ENCODE measurements at regions of chr6 and their contacts with region 1.

Region 1: GRCh38 chr6:53986165-53986720 is 125.0 kb upstream of the MLIP start:
- DNase-seq: peak; percentile 75
- H3K4me3 ChIP-seq: no peak overlapping the region
- H3K27ac ChIP-seq: no peak overlapping the region
- H3K4me1 ChIP-seq: peaks cover 13% of the 10 kb centered on the region
- H3K27me3 ChIP-seq: no peaks in the 10 kb centered on the region
- CTCF ChIP-seq: peak; percentile 65 to 68
- POLR2A ChIP-seq: no peak

Region 2: GRCh38 chr6:53879608-53880007 is 106.6 kb before region 1 on chr6:
- CTCF ChIA-PET with region 1: no interaction called
- POLR2A ChIA-PET with region 1: no interaction called
- dilution Hi-C with region 1: no loop called
- intact Hi-C with region 1: no loop called
- DNase-seq: no peak
- H3K4me3 ChIP-seq: no peak overlapping the region
- H3K27ac ChIP-seq: no peak overlapping the region
- H3K4me1 ChIP-seq: no peaks in the 10 kb centered on the region
- H3K27me3 ChIP-seq: no peaks in the 10 kb centered on the region
- CTCF ChIP-seq: no peak
- POLR2A ChIP-seq: no peak

Region 3: GRCh38 chr6:54112151-54112650 is 126.0 kb after region 1 on chr6:
- CTCF ChIA-PET with region 1: interaction called, 15 read pairs
- POLR2A ChIA-PET with region 1: no interaction called
- dilution Hi-C with region 1: no loop called
- intact Hi-C with region 1: loop called (anchors 1 kb)
- DNase-seq: peak; percentile 91
- H3K4me3 ChIP-seq: peak overlapping the region in 1 of 3 experiments; percentile 28
- H3K27ac ChIP-seq: peak overlapping the region; percentile 89
- H3K4me1 ChIP-seq: peaks cover 38% of the 10 kb centered on the region
- H3K27me3 ChIP-seq: no peaks in the 10 kb centered on the region
- CTCF ChIP-seq: no peak
- POLR2A ChIP-seq: peak; percentile 56

Region 4: GRCh38 chr6:54173089-54173488 is 186.8 kb after region 1 on chr6:
- CTCF ChIA-PET with region 1: no interaction called
- POLR2A ChIA-PET with region 1: no interaction called
- dilution Hi-C with region 1: no loop called
- intact Hi-C with region 1: no loop called
- DNase-seq: peak; percentile 8
- H3K4me3 ChIP-seq: no peak overlapping the region
- H3K27ac ChIP-seq: no peak overlapping the region
- H3K4me1 ChIP-seq: no peaks in the 10 kb centered on the region
- H3K27me3 ChIP-seq: no peaks in the 10 kb centered on the region
- CTCF ChIP-seq: no peak
- POLR2A ChIP-seq: no peak

Region 5: DNA sequence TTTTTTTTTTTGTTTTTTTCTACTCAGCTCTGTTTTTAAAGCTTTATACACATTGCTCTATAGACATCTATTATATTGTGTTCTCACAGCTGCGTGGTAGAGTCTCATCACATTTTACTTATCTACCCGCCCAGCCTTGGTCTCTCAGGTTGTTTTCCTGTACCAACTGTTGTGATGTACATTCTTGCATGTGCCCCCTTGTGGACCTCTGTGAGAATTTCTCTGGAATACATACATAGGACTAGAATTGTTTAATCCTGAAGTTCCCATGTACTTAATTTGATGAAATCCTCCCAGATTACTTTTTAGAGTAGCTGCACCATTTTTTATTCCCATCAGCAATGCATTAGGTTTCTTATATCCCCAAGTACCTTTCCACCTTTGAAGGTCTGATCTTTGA is 281.6 kb after region 1 on chr6:
- CTCF ChIA-PET with region 1: interaction called, 94 read pairs
- POLR2A ChIA-PET with region 1: no interaction called
- dilution Hi-C with region 1: no loop called
- intact Hi-C with region 1: loop called (anchors 1 kb)
- DNase-seq: peak; percentile 65
- H3K4me3 ChIP-seq: no peak overlapping the region
- H3K27ac ChIP-seq: no peak overlapping the region
- H3K4me1 ChIP-seq: peaks cover 7% of the 10 kb centered on the region
- H3K27me3 ChIP-seq: no peaks in the 10 kb centered on the region
- CTCF ChIP-seq: peak; percentile 44 to 48
- POLR2A ChIP-seq: no peak

Region 6: DNA sequence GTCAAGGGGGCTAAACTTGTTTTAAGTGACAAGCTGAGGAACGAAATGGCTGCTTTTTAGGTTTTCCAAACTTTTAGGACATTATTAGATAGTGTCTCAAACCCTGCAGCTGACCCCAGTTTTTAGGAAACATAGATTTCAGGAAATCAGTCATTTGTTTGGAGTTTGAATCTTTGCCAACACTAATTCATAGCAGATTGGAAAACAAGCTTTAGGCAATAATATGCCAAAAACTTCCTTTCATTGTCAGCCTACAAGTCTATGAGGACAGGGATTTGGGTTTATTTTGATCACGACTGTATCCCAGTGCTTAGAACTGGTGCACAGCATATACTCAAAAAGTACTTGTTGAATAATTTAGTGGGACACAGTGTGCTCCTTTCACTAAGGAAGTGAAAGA is 445.2 kb after region 1 on chr6:
- CTCF ChIA-PET with region 1: no interaction called
- POLR2A ChIA-PET with region 1: no interaction called
- dilution Hi-C with region 1: no loop called
- intact Hi-C with region 1: loop called (anchors 10 kb)
- DNase-seq: peak; percentile 73
- H3K4me3 ChIP-seq: no peak overlapping the region
- H3K27ac ChIP-seq: no peak overlapping the region
- H3K4me1 ChIP-seq: peaks cover 10% of the 10 kb centered on the region
- H3K27me3 ChIP-seq: peaks cover 25 to 26% of the 10 kb centered on the region in 2 experiments
- CTCF ChIP-seq: no peak
- POLR2A ChIP-seq: no peak

Region 7: GRCh38 chr6:54737247-54737646 is 751.0 kb after region 1 on chr6:
- CTCF ChIA-PET with region 1: interaction called, 4 read pairs
- POLR2A ChIA-PET with region 1: no interaction called
- dilution Hi-C with region 1: no loop called
- intact Hi-C with region 1: loop called (anchors 1 kb)
- DNase-seq: no peak
- H3K4me3 ChIP-seq: no peak overlapping the region
- H3K27ac ChIP-seq: no peak overlapping the region
- H3K4me1 ChIP-seq: no peaks in the 10 kb centered on the region
- H3K27me3 ChIP-seq: no peaks in the 10 kb centered on the region
- CTCF ChIP-seq: peak; percentile 15 to 29
- POLR2A ChIP-seq: no peak

Region 8: DNA sequence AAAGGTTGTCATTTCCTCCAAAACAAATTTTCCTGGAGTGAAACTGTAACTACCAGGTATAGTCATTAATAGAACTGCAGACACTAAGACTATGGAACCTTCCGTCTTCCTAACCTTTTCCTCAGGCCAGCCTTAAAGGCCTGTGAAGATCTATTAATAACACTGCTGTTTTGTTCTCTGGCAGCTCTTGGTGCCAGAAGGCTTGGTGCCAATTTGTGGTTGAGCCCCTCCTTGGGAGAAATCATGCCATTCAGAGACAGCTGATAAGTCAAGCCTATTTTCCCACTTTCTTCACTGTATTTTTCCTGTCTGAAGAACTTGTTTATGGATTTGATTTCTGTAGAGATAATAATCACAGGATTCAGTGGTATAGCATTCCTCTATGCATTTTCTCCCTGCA is 1252.9 kb after region 1 on chr6:
- CTCF ChIA-PET with region 1: interaction called, 6 read pairs
- POLR2A ChIA-PET with region 1: no interaction called
- dilution Hi-C with region 1: no loop called
- intact Hi-C with region 1: loop called (anchors 1 kb)
- DNase-seq: peak; percentile 28
- H3K4me3 ChIP-seq: no peak overlapping the region
- H3K27ac ChIP-seq: no peak overlapping the region
- H3K4me1 ChIP-seq: no peaks in the 10 kb centered on the region
- H3K27me3 ChIP-seq: peaks cover 0 to 5% of the 10 kb centered on the region in 2 experiments
- CTCF ChIP-seq: no peak
- POLR2A ChIP-seq: no peak